Left ventricle myocardium superior (tissue), 1 donor: ENCODE measurements at regions of chr6 and their contacts with region 1.

Region 1: DNA sequence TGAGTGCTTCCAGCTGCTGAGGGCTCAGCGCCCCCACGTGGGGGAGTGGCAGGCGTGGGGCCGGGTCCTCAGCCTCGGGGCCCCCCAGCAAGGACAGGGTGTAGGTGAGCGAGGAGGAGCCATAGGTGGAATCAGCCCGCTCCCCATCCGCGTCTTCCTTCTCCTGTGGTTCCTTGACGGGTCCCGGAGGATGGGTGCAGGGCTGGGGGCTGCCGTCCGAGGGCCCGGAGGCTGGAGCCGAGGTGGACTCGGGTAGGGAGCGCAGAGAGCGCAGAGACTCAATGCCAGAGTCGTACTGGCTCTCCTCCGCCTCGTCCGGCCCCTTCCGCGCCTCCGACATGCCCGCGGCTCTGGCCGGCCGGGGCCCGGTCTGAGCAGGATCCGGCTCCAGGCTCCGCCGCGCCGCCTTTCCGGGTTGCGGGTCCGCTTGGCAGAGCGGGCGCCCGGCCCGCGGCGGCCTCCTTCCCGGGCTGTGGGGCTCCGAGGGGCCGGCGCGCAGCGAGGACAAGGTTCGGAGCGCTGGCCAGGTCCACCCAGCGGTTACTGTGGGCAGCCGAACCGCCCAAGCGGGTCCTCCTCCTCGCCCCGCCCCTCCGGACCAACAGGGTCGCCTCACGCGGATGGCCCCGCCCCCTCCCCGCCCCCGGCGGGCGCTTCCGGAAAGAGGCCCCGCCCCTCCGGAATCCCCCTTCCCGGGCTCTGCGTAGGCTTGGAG is at the start of gene NFKBIE:
- DNase-seq: peak; percentile 98
- ATAC-seq: peak; percentile 96
- total RNA-seq, gene NFKBIE: 3.1 TPM

Region 2: DNA sequence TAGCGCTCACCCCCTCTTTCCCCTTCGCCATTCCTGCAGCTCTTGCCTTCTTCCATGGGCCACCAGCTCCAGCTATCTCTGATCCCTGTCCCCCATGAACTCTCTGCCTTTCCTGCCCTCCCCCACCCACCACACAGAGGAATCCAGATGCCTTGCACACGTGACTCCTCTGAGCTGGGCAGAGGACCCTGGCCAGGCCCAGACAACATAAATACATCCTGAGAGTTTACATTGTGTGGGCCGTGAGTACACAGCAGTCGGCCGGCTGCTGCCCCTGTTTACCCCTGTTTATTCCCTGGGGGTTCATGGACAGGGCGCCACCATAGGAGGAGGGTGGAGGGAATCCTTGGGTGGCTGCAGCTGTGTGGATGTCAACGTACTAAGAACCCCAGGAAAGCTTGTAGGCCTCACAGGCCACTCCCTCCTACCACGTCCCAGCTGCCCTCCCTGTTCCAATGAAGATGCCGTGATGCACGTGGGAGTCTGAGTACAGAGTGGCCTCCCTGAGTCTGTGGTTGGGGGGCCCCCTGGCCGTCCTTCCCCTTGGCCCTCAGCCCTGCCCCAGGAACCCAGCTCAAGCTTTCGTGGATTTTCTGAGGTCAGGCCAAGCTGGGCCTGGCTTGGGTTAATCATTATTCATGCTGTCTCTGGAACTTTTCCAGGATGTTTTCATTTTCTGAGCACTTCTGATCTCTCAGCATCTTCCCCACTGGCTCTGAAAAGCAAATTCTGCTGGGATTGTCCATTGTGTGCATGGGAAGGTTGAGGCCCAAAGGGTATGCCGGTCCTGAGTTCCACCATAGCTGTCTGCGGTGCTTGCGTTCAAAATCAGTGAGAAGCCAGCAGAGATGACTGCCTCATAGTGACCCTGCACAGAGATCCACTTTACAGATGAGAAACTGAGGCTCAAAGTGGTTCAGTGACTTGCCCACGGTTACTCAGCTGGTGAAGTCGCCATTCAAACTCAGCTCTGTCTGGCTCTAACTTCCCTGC is 274.2 kb before region 1 on chr6:
- intact Hi-C with region 1: no loop called
- DNase-seq: no peak
- ATAC-seq: peak; percentile 1

Region 3: DNA sequence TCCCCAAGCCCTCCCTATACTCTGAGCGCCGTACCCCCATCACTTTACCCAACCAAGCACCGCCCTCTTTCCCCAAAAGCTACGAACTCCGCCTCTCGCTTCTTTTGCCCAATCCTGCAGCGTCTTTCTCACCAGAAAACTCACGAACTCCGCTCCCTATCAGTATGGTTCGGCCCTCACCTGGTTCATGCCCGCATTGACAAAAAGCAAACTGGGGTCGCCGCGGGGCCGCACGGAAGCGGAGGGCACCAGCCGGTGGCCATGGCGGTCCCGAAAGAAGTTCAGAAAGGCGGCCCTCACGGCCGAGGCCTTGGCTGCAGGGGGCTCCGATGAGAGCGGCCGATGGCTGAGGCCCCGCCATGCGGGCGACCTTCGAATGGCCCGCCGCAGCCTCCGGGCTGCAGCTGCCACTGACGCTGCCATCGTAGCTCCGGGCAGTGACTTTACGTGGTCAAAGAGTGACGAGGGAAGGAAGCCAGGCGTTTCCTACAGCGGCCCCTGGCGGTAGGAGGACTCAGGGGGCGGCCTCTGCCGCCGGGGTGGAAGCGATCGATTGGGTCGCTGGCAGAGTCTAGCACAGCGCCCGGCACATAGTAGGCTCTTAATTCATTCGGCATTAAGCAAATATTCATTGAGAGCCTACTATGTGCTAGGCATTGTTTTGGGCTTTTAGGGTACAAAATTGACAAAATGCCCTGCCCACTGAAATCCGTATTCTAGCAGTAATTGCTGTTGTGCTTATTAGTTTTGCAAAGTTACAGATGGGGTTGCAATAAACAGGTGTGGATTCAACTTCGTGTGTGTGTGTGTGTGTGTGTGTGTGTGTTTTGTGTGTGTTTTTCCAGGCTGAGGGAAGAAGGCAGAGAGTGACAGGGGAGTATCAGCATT is 48.0 kb after region 1 on chr6 and contains the start of gene AARS2:
- intact Hi-C with region 1: loop called (anchors 10 kb)
- DNase-seq: peak; percentile 92
- ATAC-seq: peak; percentile 92
- total RNA-seq, gene AARS2: 11.5 TPM

Region 4: GRCh38 chr6:44338228-44339122 is 73.3 kb after region 1 on chr6:
- intact Hi-C with region 1: loop called (anchors 5 kb)
- DNase-seq: peak; percentile 55
- ATAC-seq: peak; percentile 80

Region 5: DNA sequence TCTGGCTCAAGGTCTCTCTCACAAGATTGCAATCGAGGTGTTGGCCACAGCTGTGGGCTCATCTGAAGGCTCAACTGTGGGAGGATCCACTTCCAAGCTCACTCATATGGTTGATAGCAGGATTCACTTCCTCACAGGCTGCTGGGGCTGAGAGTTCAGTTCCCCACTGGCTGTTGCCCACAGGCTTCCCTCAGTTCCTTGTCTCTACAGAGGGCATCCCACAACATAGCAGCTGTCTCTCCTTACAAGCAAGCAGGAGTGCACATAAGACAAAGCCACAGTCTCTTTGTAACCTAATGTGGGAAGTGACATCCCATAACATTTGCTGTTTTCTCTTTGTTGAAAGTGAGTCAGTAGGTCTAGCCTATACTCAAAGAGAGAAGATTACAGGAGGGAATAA is 91.3 kb after region 1 on chr6:
- intact Hi-C with region 1: no loop called
- DNase-seq: no peak
- ATAC-seq: no peak

Region 6: DNA sequence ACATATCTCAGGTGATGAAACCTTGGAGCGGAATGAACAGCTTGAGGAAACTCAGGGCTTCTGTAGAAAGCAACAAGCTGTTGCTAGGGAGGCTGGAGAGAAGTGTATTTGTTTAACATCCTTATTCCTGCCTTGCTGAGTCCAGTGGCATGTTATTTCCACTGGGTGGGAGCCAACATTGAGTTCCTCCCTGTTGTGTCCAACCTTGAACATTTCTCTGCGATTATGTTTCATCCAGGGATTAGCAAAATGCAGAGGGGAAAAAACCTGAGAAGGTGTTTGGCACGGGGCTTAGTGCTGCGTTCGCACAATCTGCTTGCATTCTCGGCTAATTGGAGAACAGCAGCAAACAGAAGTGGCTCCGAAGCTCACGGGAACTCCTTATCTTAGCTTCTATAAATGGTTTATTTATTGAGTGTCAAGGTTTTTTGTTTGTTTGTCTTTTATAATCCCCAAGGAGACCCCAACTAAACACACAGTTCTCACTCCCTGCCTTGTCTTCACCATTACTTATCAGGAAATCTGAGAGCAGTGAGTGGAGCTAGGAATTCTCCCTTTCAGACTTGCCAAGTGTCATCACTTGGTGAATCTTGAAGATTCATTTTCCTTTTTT is 535.1 kb after region 1 on chr6:
- intact Hi-C with region 1: no loop called
- DNase-seq: no peak
- ATAC-seq: peak; percentile 58